ENCODE measurements at regions of chr9 and their contacts with region 1.

Region 1: GRCh38 chr9:127869310-127870152 is 7.9 kb downstream of the AK1 start:
- DNase-seq: peak; percentile 67
- ATAC-seq: peak; percentile 96
- H3K4me3 ChIP-seq: no peak overlapping the region
- H3K27ac ChIP-seq: no peak overlapping the region
- H3K4me1 ChIP-seq: no peaks in the 10 kb centered on the region
- H3K27me3 ChIP-seq: no peaks in the 10 kb centered on the region
- CTCF ChIP-seq: peak; percentile 97
- POLR2A ChIP-seq: 0 out of 2 replicates have a peak, but pooled peaks have one; percentile 50
- RAD21 ChIP-seq: peak; percentile 97

Region 2: DNA sequence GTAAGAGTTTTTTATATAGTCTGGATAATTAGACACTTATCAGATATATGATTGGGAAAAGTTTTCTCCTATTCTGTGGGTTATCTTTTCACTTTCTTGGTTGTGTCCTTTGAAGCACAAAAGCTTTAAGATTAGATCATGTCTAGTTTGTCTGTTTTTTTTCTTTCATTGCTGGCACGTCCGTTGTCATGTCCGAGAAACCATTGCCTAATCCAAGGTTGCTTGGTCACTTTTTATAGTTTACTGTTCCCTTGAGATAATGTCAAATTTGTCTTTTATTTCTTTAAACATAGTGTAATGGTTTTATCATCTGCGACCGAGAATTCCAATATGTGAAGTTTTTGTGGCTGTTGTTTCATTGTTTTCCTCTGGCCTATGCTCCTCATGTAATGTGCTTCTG is 576.2 kb before region 1 on chr9:
- CTCF ChIA-PET with region 1: no interaction called
- POLR2A ChIA-PET with region 1: interaction called, 12 read pairs
- dilution Hi-C with region 1: no loop called
- in situ Hi-C with region 1: no loop called
- intact Hi-C with region 1: no loop called
- DNase-seq: no peak
- ATAC-seq: no peak
- H3K4me3 ChIP-seq: no peak overlapping the region
- H3K27ac ChIP-seq: no peak overlapping the region
- H3K4me1 ChIP-seq: no peaks in the 10 kb centered on the region
- H3K27me3 ChIP-seq: no peaks in the 10 kb centered on the region; the same call in 1 of the 2 replicates
- CTCF ChIP-seq: no peak
- POLR2A ChIP-seq: no peak
- RAD21 ChIP-seq: no peak

Region 3: GRCh38 chr9:127785023-127785932 is 84.3 kb before region 1 on chr9:
- CTCF ChIA-PET with region 1: interaction called, 8 read pairs
- POLR2A ChIA-PET with region 1: interaction called, 3 read pairs
- dilution Hi-C with region 1: no loop called
- in situ Hi-C with region 1: no loop called
- intact Hi-C with region 1: loop called (anchors 1 kb)
- DNase-seq: peak; percentile 64
- ATAC-seq: peak; percentile 70
- H3K4me3 ChIP-seq: peak overlapping the region; percentile 95
- H3K27ac ChIP-seq: peak overlapping the region; percentile 48; the same call in 1 of the 2 replicates
- H3K4me1 ChIP-seq: no peaks in the 10 kb centered on the region; the same call in 1 of the 2 replicates
- H3K27me3 ChIP-seq: no peaks in the 10 kb centered on the region
- CTCF ChIP-seq: peak; percentile 77
- POLR2A ChIP-seq: no peak; the same call in 1 of the 2 replicates
- RAD21 ChIP-seq: peak; percentile 76